A549 (cell line): ENCODE measurements at regions of chr5 and their contacts with region 1.

Region 1: GRCh38 chr5:72622170-72622760 is 115.1 kb upstream of the ZNF366 start:
- DNase-seq: no peak
- ATAC-seq: no peak
- H3K4me3 ChIP-seq: no peak overlapping the region
- H3K27ac ChIP-seq: no peak overlapping the region
- H3K4me1 ChIP-seq: peaks cover 8% of the 10 kb centered on the region; the same call in 1 of the 3 replicates
- CTCF ChIP-seq: no peak
- EP300 ChIP-seq: no peak
- POLR2A ChIP-seq: no peak
- RAD21 ChIP-seq: no peak

Region 2: GRCh38 chr5:72611118-72611730 is 11.0 kb before region 1 on chr5:
- CTCF ChIA-PET with region 1: interaction called, 24 read pairs
- POLR2A ChIA-PET with region 1: no interaction called
- DNase-seq: peak; percentile 74 to 78
- ATAC-seq: peak; percentile 99 to 100
- H3K4me3 ChIP-seq: no peak overlapping the region
- H3K27ac ChIP-seq: 0 out of 6 replicates have a peak overlapping the region, but pooled peaks of 1 of the 2 experiments have one; percentile 24
- H3K4me1 ChIP-seq: 0 out of 3 replicates have a peak, but pooled peaks cover 9% of the 10 kb centered on the region
- CTCF ChIP-seq: peak; percentile 80
- EP300 ChIP-seq: no peak
- POLR2A ChIP-seq: no peak
- RAD21 ChIP-seq: peak; percentile 81 to 83

Region 3: DNA sequence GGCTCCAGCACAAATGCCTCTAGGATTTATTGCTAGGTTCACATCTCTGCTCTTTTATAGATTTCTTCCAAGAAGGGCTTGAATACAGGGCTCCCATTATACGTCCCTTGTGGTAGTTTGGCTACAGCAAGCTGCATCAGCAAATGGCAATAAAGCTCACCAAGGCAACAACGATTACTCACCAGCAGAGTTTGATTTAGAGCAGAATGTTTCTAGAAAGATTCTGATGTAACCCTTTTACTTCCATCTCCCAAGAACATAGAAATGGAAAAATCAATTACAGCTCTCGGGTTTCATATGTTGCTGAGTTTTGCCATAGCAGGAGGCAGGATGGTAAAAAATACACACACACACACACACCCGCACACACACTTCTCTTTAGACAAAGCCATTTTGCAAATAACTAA is 70.0 kb after region 1 on chr5:
- CTCF ChIA-PET with region 1: no interaction called
- POLR2A ChIA-PET with region 1: no interaction called
- DNase-seq: no peak
- ATAC-seq: no peak
- H3K4me3 ChIP-seq: no peak overlapping the region
- H3K27ac ChIP-seq: no peak overlapping the region
- H3K4me1 ChIP-seq: no peaks in the 10 kb centered on the region
- CTCF ChIP-seq: no peak
- EP300 ChIP-seq: no peak
- POLR2A ChIP-seq: no peak
- RAD21 ChIP-seq: no peak

Region 4: DNA sequence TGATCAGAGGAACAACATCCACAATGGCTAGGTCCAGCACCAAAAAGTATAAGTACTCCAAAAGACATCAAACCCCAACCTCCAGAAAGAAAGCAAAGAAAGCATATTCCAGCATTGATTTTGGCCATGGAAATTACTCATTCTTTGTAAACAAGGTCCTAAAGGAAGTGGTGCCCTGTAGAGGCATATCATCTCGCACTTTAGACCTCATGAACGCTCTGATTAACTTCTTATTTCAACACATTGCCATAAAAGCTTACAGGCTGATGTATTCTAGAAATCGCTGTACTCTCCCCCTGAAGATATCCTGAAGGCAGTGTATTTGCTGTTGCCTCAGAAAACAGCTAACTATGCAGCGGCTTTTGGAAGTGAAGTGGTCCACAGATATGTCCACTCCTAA is 111.5 kb after region 1 on chr5:
- CTCF ChIA-PET with region 1: no interaction called
- POLR2A ChIA-PET with region 1: no interaction called
- DNase-seq: no peak
- ATAC-seq: no peak
- H3K4me3 ChIP-seq: no peak overlapping the region
- H3K27ac ChIP-seq: no peak overlapping the region
- H3K4me1 ChIP-seq: no peaks in the 10 kb centered on the region
- CTCF ChIP-seq: no peak
- EP300 ChIP-seq: no peak
- POLR2A ChIP-seq: no peak
- RAD21 ChIP-seq: no peak